Sigmoid colon (tissue), 7 donors: ENCODE measurements at regions of chr7 and their contacts with region 1.

Region 1: DNA sequence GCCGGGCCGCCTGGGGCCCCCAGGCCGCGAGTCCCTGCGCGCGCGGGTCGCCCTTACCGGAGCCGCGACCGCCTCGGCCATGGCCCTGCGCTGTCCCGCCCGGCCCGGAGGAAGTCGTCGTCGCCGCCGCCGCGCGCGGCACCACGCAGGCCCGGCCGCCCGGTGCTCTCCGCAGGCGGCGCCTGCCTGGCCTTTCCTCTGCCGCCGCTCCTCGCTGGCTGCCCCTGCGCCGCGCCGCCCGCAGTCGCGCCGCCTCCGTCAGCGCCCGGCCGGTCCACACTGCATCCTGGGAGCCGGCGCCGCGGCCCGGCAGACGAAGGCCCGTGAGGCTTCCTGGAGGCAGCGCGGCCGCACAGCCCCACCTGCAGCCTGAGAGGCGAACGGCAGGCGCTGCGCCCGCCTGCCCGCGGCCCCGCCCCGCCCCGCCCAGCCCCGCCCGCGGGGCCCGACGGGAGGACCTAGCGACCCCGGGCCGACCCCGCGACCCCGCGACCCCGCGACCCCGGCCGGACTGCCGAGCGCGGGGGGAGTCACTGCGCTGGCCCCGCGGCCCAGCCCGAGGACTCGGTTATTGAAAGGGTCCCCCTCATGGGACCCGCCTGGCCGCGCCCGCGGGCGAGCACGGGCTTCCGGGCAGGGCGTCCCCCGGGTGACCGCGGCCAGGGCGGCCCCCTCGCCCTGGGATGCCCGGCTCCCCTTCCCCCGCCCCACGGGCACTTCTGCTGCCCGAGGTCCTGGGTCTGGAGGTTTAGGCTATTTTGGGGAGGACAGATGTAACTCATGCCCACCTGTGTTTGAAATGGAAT is at the start of gene ZNF746:
- DNase-seq: peak; percentile 89
- H3K4me3 ChIP-seq: peak within 1 kb of the TSS; percentile 61 to 93 (median 84)
- H3K27ac ChIP-seq: peak within 1 kb of the TSS; percentile 84 to 96 (median 94)
- H3K4me1 ChIP-seq: peaks cover 0 to 24% (median 20%) of the 10 kb centered on the region in 4 donors
- H3K27me3 ChIP-seq: no peaks in the 10 kb centered on the region
- CTCF ChIP-seq: peak in 1 of 4 experiments; percentile 47
- EP300 ChIP-seq: no peak
- POLR2A ChIP-seq: no peak
- total RNA-seq, gene ZNF746: 16.4 to 18.9 (median 17.7) TPM

Region 2: GRCh38 chr7:149125863-149126661 is 371.6 kb before region 1 on chr7 and contains the start of gene ZNF425:
- intact Hi-C with region 1: loop called (anchors 5 kb)
- DNase-seq: peak; percentile 95
- H3K4me3 ChIP-seq: peak within 1 kb of the TSS; percentile 87 to 99 (median 90)
- H3K27ac ChIP-seq: peak within 1 kb of the TSS; percentile 96 to 99 (median 97)
- H3K4me1 ChIP-seq: peaks cover 0 to 17% (median 13%) of the 10 kb centered on the region in 4 donors
- H3K27me3 ChIP-seq: no peaks in the 10 kb centered on the region
- CTCF ChIP-seq: peak; percentile 90 to 98 (median 96)
- EP300 ChIP-seq: no peak
- POLR2A ChIP-seq: peak; percentile 87 to 90
- total RNA-seq, gene ZNF425: 2.9 to 4.9 (median 3.6) TPM

Region 3: GRCh38 chr7:149422129-149422913 is 75.3 kb before region 1 on chr7:
- intact Hi-C with region 1: loop called (anchors 5 kb)
- DNase-seq: no peak
- H3K4me3 ChIP-seq: peak overlapping the region; percentile 29 to 52 (median 46)
- H3K27ac ChIP-seq: peak overlapping the region in 3 of 4 donors; percentile 5 to 27 (median 21)
- H3K4me1 ChIP-seq: peaks cover 0 to 16% (median 12%) of the 10 kb centered on the region in 4 donors
- H3K27me3 ChIP-seq: peaks cover 0 to 11% (median 0%) of the 10 kb centered on the region in 3 donors
- CTCF ChIP-seq: peak in 1 of 4 experiments; percentile 36
- EP300 ChIP-seq: no peak
- POLR2A ChIP-seq: no peak

Region 4: GRCh38 chr7:149460493-149461277 is 37.0 kb before region 1 on chr7 and contains the start of gene ZNF777:
- intact Hi-C with region 1: loop called (anchors 5 kb)
- DNase-seq: peak; percentile 92
- H3K4me3 ChIP-seq: peak within 1 kb of the TSS; percentile 46 to 72 (median 62)
- H3K27ac ChIP-seq: peak within 1 kb of the TSS; percentile 80 to 86 (median 84)
- H3K4me1 ChIP-seq: peaks cover 0 to 26% (median 22%) of the 10 kb centered on the region in 4 donors
- H3K27me3 ChIP-seq: no peaks in the 10 kb centered on the region
- CTCF ChIP-seq: peak; percentile 10 to 39 (median 32)
- EP300 ChIP-seq: no peak
- POLR2A ChIP-seq: no peak
- total RNA-seq, gene ZNF777: 5.7 to 7.7 (median 6.6) TPM

Region 5: GRCh38 chr7:149624419-149625339 is 127.0 kb after region 1 on chr7:
- intact Hi-C with region 1: loop called (anchors 5 kb)
- DNase-seq: peak; percentile 96
- H3K4me3 ChIP-seq: peak overlapping the region; percentile 82 to 100 (median 93)
- H3K27ac ChIP-seq: peak overlapping the region; percentile 89 to 95 (median 92)
- H3K4me1 ChIP-seq: peaks cover 0 to 30% (median 23%) of the 10 kb centered on the region in 4 donors
- H3K27me3 ChIP-seq: no peaks in the 10 kb centered on the region
- CTCF ChIP-seq: peak; percentile 49 to 98 (median 82)
- EP300 ChIP-seq: no peak
- POLR2A ChIP-seq: peak; percentile 16 to 32

Region 6: DNA sequence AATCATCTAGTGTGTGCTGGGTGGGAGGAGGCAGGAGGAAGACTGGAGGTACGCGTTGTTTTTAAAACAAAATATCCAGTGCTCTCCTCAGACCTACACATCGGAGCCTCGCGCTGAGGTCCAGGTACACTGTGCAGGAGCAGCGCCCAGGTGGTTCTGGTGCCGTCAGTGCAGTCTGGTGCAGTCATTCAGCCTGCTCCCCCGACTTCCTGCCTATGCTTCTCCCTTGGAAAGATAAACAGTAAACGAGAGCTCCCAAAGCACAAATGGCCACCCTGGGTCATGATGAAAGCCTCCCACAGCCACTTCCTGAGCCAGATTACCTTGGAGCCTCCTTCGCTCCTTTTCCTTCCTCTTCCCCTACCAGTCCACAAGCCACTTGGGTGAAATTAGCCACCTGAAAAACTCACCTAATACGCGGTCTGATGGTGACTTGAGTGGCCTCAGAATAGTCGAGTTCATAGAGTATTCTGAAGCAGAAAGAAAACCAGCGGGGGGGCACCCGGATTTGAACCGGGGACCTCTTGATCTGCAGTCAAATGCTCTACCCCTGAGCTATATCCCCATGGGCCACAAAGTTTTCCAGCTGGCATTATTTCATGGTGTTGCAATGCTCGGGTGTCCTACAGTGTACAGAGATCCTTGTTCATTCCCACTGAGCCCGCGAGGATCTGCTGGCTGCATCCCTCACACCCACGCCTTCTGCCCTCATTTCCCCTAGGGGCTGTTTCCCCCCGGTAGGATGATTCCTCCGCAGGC is 193.2 kb after region 1 on chr7:
- intact Hi-C with region 1: no loop called
- DNase-seq: peak; percentile 69
- H3K4me3 ChIP-seq: no peak overlapping the region
- H3K27ac ChIP-seq: peak overlapping the region in 1 of 4 donors; percentile 47
- H3K4me1 ChIP-seq: peaks cover 0 to 26% (median 15%) of the 10 kb centered on the region in 4 donors
- H3K27me3 ChIP-seq: peaks cover 0 to 28% (median 7%) of the 10 kb centered on the region in 3 donors
- CTCF ChIP-seq: no peak
- EP300 ChIP-seq: no peak
- POLR2A ChIP-seq: no peak